Left ventricle myocardium inferior (tissue), 1 donor: ENCODE measurements at regions of chr18 and their contacts with region 1.

Region 1: DNA sequence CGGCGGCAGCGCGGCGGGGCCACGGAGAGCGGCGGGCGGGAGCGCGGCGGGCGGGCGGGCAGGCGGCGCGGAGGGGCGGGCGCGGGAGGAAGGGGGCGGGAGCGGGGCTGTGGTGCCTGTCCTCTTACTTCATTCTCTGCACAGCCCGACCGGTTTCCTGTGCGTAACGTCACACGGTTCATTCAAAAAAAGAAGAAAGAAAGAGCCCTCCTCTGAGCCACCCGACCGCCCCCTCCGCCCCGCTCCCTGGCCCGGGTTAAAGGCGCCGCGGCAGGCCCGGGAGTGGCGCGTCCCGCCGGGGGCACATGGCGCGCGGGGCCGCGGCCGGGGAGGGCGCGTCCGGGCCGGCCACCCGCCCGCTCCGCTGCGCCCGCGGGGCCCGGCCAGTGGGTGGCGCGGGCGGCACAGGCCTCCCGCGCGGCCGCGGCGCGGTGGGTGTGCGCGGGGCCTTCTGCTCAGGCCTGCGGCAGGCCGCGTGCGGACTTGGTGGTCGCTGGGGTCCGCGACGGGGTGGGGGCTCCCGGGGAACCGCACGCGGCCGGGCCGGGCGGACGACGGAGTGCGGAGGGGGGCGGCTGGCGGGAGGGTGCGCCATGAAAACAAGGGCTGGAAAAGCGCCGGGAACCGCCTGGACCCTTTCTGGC is 599 bp upstream of the BCL2 start:
- DNase-seq: peak; percentile 85
- H3K4me3 ChIP-seq: peak overlapping the region; percentile 73
- H3K27ac ChIP-seq: peak overlapping the region; percentile 85
- H3K4me1 ChIP-seq: peaks cover 53% of the 10 kb centered on the region
- H3K27me3 ChIP-seq: no peaks in the 10 kb centered on the region
- CTCF ChIP-seq: peak; percentile 25

Region 2: DNA sequence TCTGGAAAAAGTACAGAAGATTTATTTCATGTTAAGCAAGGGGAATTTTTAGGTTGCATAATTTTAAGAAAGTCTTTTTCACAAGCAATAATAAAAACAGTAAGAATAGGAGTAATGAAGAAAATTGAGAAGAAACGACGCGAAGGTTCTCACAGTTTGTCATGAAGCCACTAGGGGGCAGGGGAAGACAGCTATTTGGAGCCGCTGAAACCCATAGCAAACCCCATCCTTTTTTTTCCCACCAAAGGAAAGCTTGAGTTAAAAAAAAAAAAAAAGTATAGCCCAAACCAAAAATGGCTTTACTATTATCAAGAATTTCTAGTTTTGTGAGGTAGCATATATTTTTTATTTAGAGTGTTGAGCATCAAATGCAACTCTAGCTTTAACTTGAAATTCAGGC is 303.9 kb before region 1 on chr18:
- intact Hi-C with region 1: loop called (anchors 10 kb)
- DNase-seq: no peak
- H3K4me3 ChIP-seq: no peak overlapping the region
- H3K27ac ChIP-seq: no peak overlapping the region
- H3K4me1 ChIP-seq: peaks cover 3% of the 10 kb centered on the region
- H3K27me3 ChIP-seq: peaks cover 23% of the 10 kb centered on the region
- CTCF ChIP-seq: peak; percentile 83

Region 3: DNA sequence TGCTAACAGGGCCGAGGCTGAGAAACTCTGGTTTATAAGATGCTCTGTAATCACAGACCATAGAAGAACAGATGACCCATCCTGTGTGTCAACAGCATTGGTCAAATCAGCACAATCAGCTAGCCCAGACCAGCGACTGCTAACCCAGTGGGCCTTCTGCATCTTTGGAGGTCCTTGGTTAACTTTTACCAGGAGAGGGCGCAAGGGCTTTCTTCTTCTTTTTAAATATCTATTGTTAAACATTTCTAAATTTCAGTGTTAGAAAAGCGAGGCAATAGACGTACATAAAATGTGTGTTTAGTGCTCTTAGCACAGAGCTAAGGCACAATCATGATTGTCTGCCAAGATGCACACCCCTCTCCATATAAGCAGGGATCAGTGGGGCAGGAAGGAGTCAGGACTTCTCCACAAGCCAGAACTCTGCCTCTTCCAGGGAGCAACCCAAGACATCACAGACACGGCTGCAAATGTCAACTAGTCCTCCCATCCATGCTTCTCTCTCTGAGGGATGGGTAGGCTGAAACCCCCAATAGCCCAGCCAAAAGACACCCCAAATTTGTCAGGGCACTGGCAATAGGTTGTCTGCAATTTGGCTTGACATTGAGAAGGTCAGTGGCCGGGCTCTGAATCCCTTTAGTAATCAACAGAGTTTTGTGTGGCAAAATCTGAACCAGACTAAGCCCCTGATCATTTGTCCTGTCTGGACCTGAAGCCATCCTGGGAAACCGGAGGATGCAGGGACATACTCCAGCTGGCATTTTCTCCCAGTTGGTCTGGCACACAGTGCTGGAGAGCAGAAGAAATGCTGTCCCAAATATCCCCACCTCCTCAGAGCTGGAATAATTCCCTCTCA is 188.8 kb before region 1 on chr18:
- intact Hi-C with region 1: loop called (anchors 5 kb)
- DNase-seq: no peak
- H3K4me3 ChIP-seq: no peak overlapping the region
- H3K27ac ChIP-seq: peak overlapping the region; percentile 32
- H3K4me1 ChIP-seq: peaks cover 12% of the 10 kb centered on the region
- H3K27me3 ChIP-seq: no peaks in the 10 kb centered on the region
- CTCF ChIP-seq: peak; percentile 79

Region 4: DNA sequence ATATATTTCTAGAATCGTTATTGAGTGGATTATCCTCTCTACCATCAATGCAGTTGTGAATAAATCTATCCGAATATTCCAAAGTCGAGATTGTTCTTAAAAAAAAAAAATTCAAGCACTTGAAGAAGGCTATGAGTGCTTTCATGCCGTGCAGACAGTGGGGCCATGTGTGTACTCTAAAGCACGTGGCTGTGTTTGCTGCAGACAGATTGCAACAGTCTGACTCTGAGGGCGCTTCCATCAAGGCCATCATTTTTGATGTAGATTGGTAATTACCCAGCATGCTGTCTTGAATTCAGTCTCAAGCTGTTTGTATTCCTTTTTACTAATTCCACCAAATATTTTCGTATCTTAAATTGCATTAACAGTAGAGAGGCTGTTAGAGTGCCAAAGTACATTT is 1154.6 kb after region 1 on chr18:
- intact Hi-C with region 1: no loop called
- DNase-seq: no peak
- H3K4me3 ChIP-seq: no peak overlapping the region
- H3K27ac ChIP-seq: no peak overlapping the region
- H3K4me1 ChIP-seq: no peaks in the 10 kb centered on the region
- H3K27me3 ChIP-seq: no peaks in the 10 kb centered on the region
- CTCF ChIP-seq: no peak